ENCODE measurements at regions of chr1 and their contacts with region 1.

Region 1: GRCh38 chr1:55304229-55304740 is 89.1 kb upstream of the USP24 start:
- DNase-seq: no peak
- H3K4me3 Mint-ChIP-seq: no peak overlapping the region
- H3K27ac Mint-ChIP-seq: no peak overlapping the region
- H3K4me1 Mint-ChIP-seq: no peaks in the 10 kb centered on the region
- H3K27me3 Mint-ChIP-seq: peaks cover 8% of the 10 kb centered on the region

Region 2: GRCh38 chr1:55318116-55318817 is 14.0 kb after region 1 on chr1:
- intact Hi-C with region 1: no loop called
- DNase-seq: no peak
- H3K4me3 Mint-ChIP-seq: no peak overlapping the region
- H3K27ac Mint-ChIP-seq: no peak overlapping the region
- H3K4me1 Mint-ChIP-seq: peaks cover 10% of the 10 kb centered on the region
- H3K27me3 Mint-ChIP-seq: peaks cover 2% of the 10 kb centered on the region

Region 3: GRCh38 chr1:55443175-55443915 is 139.1 kb after region 1 on chr1:
- intact Hi-C with region 1: loop called (anchors 10 kb)
- DNase-seq: no peak
- H3K4me3 Mint-ChIP-seq: no peak overlapping the region
- H3K27ac Mint-ChIP-seq: no peak overlapping the region
- H3K4me1 Mint-ChIP-seq: peaks cover 9% of the 10 kb centered on the region
- H3K27me3 Mint-ChIP-seq: peaks cover 13% of the 10 kb centered on the region

Measured in activated T-helper 1 cell treated with anti-CD3 and anti-CD28 coated beads, Interleukin-12 subunit alpha, Interleukin-12 subunit beta, Interleukin-2, Interleukin-4 antibody, amounts not matched to agents 30 ng/mL and 10 ng/mL and 1 ng/mL, durations not matched to agents 14 hours and 24 hours and 36 hours (primary cell).